Breast epithelium (tissue), 4 donors: ENCODE measurements at regions of chr4 and their contacts with region 1.

Region 1: GRCh38 chr4:47349326-47349725 is 114.2 kb downstream of the COMMD8 start:
- DNase-seq: no peak
- H3K4me3 ChIP-seq: no peak overlapping the region
- H3K27ac ChIP-seq: no peak overlapping the region
- H3K4me1 ChIP-seq: no peaks in the 10 kb centered on the region
- H3K27me3 ChIP-seq: no peaks in the 10 kb centered on the region
- CTCF ChIP-seq: no peak
- POLR2A ChIP-seq: no peak

Region 2: DNA sequence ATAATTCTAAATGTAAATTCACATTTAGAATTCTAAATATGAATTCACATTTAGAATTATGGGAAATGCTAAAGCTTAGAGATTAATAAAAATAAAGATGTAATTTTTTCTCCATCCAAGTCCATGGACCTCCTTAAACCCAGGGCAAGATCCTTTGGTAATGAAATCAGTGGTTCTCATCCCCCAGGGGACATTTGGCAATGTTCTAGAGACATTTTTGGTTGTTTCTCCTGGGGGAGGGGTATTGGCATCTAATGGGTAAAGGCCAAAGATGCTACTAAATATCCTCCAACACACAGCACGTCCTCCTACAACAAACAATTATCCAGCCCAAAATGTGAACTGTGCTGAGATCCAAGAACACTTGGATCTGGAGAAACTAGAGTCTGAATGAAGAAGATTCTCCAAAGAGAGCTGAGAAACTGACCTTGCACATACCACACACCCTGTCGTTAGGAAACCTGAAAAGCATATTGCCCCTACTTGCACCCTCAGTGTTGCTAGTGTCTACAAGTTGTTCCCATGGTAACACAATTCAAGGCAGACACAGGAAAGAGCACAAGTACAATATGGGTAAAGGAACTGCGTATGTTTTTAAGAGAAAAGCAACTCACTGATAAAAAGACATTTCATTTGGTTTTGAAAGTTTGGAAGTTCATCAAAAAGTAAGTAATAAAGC is 709.1 kb after region 1 on chr4:
- intact Hi-C with region 1: loop called (anchors 10 kb)
- DNase-seq: no peak
- H3K4me3 ChIP-seq: no peak overlapping the region
- H3K27ac ChIP-seq: no peak overlapping the region
- H3K4me1 ChIP-seq: no peaks in the 10 kb centered on the region
- H3K27me3 ChIP-seq: no peaks in the 10 kb centered on the region
- CTCF ChIP-seq: no peak
- POLR2A ChIP-seq: no peak